Psoas muscle (tissue), 8 donors: ENCODE measurements at regions of chr1 and their contacts with region 1.

Region 1: DNA sequence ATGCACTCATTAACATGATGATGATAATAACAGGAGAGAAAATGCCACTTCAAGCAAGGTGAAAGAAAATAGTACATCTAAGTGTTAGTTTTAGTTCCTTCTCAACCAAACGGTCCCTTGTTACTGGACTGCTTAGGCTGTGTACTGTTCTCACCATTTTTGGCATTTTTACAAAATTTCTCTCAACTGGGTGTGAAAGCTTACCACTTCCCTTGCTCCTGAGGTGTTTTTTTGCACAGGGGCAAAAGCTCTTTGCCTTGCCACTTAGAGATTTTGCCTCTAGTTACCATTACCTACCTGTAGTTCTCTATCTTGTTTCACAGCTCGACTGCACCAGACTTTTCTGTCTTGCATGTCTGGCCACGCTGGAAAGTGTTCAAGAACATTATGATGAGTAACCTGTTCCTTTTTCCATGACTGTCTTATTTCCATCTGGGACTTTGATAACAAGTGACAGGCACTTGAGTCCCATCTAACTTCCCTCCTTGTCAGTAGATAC is 10.7 kb downstream of the NEK7 start:
- DNase-seq: no peak
- ATAC-seq: peak; percentile 68 to 95 (median 82)
- H3K4me3 ChIP-seq: no peak overlapping the region
- H3K27ac ChIP-seq: peak overlapping the region; percentile 50
- H3K4me1 ChIP-seq: peaks cover 69% of the 10 kb centered on the region
- H3K27me3 ChIP-seq: no peaks in the 10 kb centered on the region
- CTCF ChIP-seq: no peak

Region 2: GRCh38 chr1:198201956-198202784 is 34.7 kb after region 1 on chr1:
- intact Hi-C with region 1: loop called in 1 of 2 experiments (anchors 5 kb)
- DNase-seq: no peak
- ATAC-seq: peak; percentile 32 to 84 (median 72)
- H3K4me3 ChIP-seq: no peak overlapping the region
- H3K27ac ChIP-seq: no peak overlapping the region
- H3K4me1 ChIP-seq: peaks cover 27% of the 10 kb centered on the region
- H3K27me3 ChIP-seq: no peaks in the 10 kb centered on the region
- CTCF ChIP-seq: no peak

Region 3: DNA sequence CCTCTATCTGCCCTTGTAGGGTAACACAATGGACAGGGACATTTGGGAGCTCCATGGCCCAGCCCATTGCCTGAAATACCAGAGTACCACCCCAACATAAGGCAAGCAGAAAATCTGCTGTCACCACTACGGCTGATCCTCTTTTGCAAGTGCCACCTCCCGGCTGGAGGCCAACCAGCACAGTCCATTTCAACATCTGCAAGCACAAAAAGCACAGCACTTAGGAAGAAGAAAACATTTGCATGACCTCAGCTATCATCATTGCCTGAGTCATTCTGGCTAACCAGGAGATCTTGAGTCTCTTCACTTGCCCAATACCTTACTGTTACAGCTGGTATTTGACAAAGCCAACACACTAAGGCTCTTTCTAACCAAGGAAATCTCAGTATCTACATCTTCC is 45.2 kb after region 1 on chr1:
- intact Hi-C with region 1: loop called in 1 of 2 experiments (anchors 10 kb)
- DNase-seq: peak in 1 of 2 donors; percentile 30
- ATAC-seq: peak in 3 of 4 donors; percentile 21 to 49 (median 49)
- H3K4me3 ChIP-seq: no peak overlapping the region
- H3K27ac ChIP-seq: no peak overlapping the region
- H3K4me1 ChIP-seq: no peaks in the 10 kb centered on the region
- H3K27me3 ChIP-seq: no peaks in the 10 kb centered on the region
- CTCF ChIP-seq: no peak

Region 4: DNA sequence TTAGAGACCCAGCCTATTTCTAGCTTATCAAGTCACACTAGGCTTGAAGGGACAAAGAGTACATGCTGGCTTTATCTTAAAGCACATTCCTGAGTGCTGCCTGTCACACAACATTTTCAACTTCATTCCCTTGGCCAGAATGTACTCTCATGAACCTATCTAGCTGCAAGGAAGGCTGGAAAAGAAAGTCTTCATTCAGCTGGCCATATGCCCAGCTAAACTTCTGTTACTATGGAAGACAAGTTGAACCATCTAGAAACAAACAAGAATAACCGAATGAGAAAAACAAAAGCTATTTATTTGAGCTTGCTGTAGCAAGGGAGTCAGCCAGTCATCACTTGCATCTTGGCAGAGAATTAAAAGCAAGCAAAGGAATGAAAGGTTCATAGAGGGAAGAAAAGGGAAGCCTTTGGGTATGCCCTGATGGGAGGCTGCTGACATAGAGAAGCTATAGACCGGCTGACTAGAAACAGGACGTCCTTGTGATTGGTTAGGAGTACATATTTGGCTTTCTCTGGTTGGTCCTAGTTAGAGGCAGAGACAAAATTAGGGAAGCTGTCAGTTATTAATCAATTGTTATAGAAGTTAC is 97.7 kb after region 1 on chr1:
- intact Hi-C with region 1: loop called in 1 of 2 experiments (anchors 10 kb)
- DNase-seq: no peak
- ATAC-seq: peak in 2 of 4 donors; percentile 55 to 63
- H3K4me3 ChIP-seq: no peak overlapping the region
- H3K27ac ChIP-seq: no peak overlapping the region
- H3K4me1 ChIP-seq: peaks cover 10% of the 10 kb centered on the region
- H3K27me3 ChIP-seq: no peaks in the 10 kb centered on the region
- CTCF ChIP-seq: no peak